ENCODE measurements at regions of chr17 and their contacts with region 1.

Region 1: GRCh38 chr17:68777243-68777855 is 176.2 kb upstream of the FAM20A start:
- DNase-seq: peak; percentile 81 to 91
- H3K4me3 ChIP-seq: no peak overlapping the region
- CTCF ChIP-seq: no peak
- POLR2A ChIP-seq: no peak

Region 2: DNA sequence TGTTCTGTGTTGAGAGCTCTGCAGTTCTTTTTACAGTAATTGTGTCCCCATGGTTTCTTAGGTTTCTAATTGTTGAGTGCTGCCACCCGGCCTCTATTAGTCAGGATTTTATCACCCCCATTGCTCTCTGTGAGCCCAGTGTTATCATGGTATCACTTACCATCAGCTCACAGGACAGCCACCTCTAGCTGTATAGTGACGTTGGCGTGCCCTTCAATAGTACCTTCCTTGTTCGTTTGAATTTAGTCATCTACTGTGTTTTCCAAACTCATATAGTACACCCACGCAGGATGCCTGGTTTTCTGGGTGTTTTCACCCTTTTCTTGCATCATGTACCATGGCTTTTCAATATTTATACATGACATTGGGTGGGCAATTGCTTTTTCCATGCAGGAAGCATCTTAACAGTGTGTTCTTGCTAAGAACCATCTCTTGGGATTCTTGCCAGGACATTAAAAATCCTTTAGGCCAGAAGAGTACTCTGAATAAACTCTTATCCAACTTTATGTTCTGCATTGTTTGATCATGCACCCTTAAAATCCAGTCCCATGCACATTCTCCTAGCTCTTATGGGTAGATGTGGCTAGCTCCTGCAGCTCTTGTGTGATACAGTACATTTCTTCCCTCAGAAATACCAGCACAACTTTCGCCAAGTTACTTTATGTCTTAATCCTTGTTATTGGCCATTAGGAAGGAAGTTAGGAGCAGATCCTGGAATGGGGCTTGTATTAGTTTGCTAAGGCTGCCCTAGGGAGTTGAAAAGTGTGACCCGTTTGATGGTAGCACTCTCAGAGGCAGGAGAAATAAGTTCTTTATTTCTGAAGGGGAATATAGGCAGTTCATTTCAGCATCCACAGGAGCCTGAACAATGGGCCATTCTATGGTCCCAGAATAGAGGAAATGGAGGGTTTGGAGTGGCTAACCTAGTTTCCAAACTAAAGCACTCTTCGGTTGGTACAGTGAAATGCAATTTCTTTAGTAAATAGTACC is 462.6 kb after region 1 on chr17:
- intact Hi-C with region 1: loop called (anchors 5 kb)
- DNase-seq: no peak
- H3K4me3 ChIP-seq: no peak overlapping the region
- CTCF ChIP-seq: no peak
- POLR2A ChIP-seq: no peak

Measured in lower leg skin (tissue), 4 donors.